Mucosa of descending colon (tissue), 3 donors: ENCODE measurements at regions of chr6 and their contacts with region 1.

Region 1: GRCh38 chr6:90478789-90479602 is 107.9 kb downstream of the MAP3K7 start:
- DNase-seq: peak; percentile 77 to 89 (median 87)
- ATAC-seq: peak; percentile 99
- H3K4me3 ChIP-seq: no peak overlapping the region
- H3K4me1 ChIP-seq: no peaks in the 10 kb centered on the region
- CTCF ChIP-seq: peak; percentile 54

Region 2: DNA sequence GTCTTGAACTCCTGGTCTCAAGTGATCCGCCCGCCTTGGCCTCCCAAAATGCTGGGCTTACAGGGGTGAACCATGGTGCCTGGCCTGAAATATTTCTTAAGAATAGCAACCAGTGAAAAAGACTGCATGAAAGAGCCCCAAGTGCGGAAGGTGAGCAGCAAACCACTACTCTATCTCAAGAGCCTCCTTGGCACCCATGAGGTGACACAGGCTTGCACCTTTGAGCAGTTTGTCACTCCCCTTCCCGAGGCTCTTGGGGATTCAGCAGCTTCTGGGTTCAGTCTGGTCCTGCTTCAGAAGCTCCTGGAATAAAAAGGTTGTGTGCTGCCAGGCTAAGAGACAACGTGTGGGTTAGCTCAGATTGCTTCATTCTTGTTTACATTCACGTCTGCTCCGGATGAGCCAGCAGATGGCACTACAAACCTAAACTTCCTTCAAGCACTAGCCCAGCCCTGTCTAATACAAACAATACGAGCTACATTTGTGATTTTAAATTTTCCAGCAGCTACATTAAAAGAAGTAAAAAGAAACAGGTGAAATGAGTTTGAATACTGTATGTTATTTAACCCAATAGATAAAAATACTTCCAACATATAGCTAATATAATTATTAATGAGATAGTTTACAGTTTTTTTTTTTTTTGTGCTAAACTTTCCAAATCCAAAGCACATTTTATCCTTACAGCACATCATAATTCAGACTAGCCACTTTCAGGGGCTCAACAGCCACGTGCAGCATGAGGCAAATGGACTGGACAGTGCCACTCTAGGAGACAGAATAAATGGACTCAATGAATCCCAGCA is 538.6 kb before region 1 on chr6:
- intact Hi-C with region 1: loop called (anchors 5 to 10 kb)
- DNase-seq: peak in 2 of 3 donors; percentile 58 to 85
- ATAC-seq: peak; percentile 92
- H3K4me3 ChIP-seq: no peak overlapping the region
- H3K4me1 ChIP-seq: peaks cover 12% of the 10 kb centered on the region
- CTCF ChIP-seq: peak; percentile 35